ENCODE measurements at regions of chr3 and their contacts with region 1.

Region 1: GRCh38 chr3:73100741-73101559 is 39.5 kb downstream of the EBLN2 start:
- DNase-seq: peak; percentile 90
- H3K4me3 ChIP-seq: peak overlapping the region in 1 of 2 experiments; percentile 26; a peak in 1 of 4 replicates
- H3K27ac ChIP-seq: no peak overlapping the region
- H3K4me1 ChIP-seq: peaks cover 0 to 4% of the 10 kb centered on the region in 2 experiments; a peak in 1 of 4 replicates
- H3K27me3 ChIP-seq: no peaks in the 10 kb centered on the region
- CTCF ChIP-seq: peak; percentile 96
- EP300 ChIP-seq: no peak
- RAD21 ChIP-seq: peak; percentile 98

Region 2: DNA sequence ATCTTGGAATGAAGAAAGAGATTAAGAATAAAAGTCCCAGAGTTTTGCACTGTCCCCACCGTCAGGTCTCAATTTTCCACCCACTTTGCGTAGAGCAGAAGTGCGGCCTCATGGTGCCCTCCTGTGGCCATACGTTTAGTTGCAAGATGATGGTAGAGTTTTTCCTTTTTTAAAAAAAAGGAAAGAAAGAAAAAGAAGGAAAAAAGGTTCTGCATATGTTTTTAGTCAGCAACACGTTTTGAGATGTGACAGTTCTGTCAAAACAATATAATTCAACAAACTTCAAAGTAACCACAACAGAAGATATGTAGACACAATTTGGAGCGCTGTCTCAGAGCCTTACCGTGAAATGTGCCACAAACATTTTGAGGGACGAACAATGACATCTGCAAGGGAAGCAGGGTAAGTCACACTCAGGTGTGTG is 14.9 kb before region 1 on chr3:
- CTCF ChIA-PET with region 1: interaction called, 15 read pairs
- POLR2A ChIA-PET with region 1: no interaction called
- DNase-seq: peak; percentile 71
- H3K4me3 ChIP-seq: no peak overlapping the region; a peak in 1 of 4 replicates
- H3K27ac ChIP-seq: no peak overlapping the region
- H3K4me1 ChIP-seq: no peaks in the 10 kb centered on the region
- H3K27me3 ChIP-seq: no peaks in the 10 kb centered on the region
- CTCF ChIP-seq: peak; percentile 85
- EP300 ChIP-seq: no peak
- RAD21 ChIP-seq: peak; percentile 97

Region 3: DNA sequence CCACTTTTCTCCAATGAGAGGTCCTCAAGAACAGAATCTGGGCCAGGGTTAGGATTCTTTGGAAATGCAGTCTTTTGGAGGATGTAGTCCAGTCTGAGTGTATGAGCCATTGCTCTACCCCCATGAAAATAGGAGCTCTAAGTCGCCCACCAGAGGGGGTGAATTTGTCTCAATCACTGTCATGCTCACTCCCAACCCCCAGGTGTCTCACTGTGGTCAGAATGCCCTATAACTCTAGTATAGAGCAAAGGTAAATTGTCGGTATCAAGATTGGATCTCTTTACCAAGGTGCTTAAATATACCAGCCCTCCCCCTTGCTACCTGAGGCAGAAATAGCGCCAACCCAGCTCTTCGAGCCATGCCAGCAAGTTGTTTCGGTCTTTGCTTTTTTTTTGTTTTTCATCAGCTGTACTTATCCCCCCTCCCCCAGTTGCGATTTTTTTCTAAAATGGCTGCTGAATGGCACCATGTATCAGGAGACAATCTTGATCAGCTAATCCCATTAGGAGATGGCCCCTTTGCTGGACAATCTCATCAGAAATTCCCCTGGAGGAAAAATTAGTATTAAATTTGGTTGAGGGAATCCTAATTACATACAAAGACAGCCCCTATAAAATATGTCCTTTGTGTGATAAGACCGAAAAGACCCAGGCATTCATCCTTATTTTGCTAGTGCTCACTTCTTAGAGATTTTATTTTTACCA is 91.2 kb after region 1 on chr3:
- CTCF ChIA-PET with region 1: interaction called, 11 read pairs
- POLR2A ChIA-PET with region 1: no interaction called
- DNase-seq: peak; percentile 61
- H3K4me3 ChIP-seq: no peak overlapping the region; a peak in 2 of 4 replicates
- H3K27ac ChIP-seq: peak overlapping the region in 1 of 2 experiments; percentile 91; a peak in 2 of 4 replicates
- H3K4me1 ChIP-seq: peaks cover 0 to 8% of the 10 kb centered on the region in 2 experiments; a peak in 2 of 4 replicates
- H3K27me3 ChIP-seq: no peaks in the 10 kb centered on the region
- CTCF ChIP-seq: peak; percentile 38; the same call in 1 of the 2 replicates
- EP300 ChIP-seq: peak in 1 of 2 experiments; percentile 96; a peak in 2 of 4 replicates
- RAD21 ChIP-seq: peak; percentile 64

Region 4: DNA sequence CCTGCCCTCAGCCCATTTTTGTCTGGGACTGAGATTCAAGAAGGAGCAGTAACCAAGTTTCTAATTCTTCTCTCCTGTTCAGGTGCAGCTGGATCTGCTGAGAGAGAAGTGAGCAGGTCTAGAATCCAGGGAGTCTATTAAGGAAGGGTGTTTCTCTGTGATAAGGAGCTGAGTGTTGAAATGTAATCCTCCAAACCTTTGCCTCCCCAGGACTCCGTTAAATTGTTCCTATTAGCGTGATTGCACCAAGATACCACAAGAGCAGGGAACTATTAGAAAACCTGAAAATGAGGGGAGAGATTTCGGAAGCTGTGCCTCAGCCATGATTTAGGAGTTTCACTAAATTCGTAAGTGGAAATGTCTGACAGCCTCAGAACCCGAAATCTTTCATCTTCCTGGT is 153.1 kb after region 1 on chr3:
- CTCF ChIA-PET with region 1: interaction called, 10 read pairs
- POLR2A ChIA-PET with region 1: no interaction called
- DNase-seq: no peak
- H3K4me3 ChIP-seq: no peak overlapping the region
- H3K27ac ChIP-seq: no peak overlapping the region
- H3K4me1 ChIP-seq: peaks cover 0 to 8% of the 10 kb centered on the region in 2 experiments; a peak in 1 of 4 replicates
- H3K27me3 ChIP-seq: no peaks in the 10 kb centered on the region
- CTCF ChIP-seq: no peak
- EP300 ChIP-seq: no peak
- RAD21 ChIP-seq: no peak

Region 5: GRCh38 chr3:73432023-73432705 is 331.2 kb after region 1 on chr3:
- CTCF ChIA-PET with region 1: interaction called, 60 read pairs
- POLR2A ChIA-PET with region 1: interaction called, 3 read pairs
- DNase-seq: peak; percentile 68
- H3K4me3 ChIP-seq: peak overlapping the region in 1 of 2 experiments; percentile 38; a peak in 2 of 4 replicates
- H3K27ac ChIP-seq: peak overlapping the region in 1 of 2 experiments; percentile 94; a peak in 2 of 4 replicates
- H3K4me1 ChIP-seq: peaks cover 0 to 54% of the 10 kb centered on the region in 2 experiments; a peak in 2 of 4 replicates
- H3K27me3 ChIP-seq: no peaks in the 10 kb centered on the region
- CTCF ChIP-seq: peak; percentile 85
- EP300 ChIP-seq: no peak
- RAD21 ChIP-seq: peak; percentile 81